CD8-positive, alpha-beta T cell (primary cell): ENCODE measurements at regions of chr16 and their contacts with region 1.

Region 1: GRCh38 chr16:28211712-28212534 is at the start of gene XPO6:
- DNase-seq: peak; percentile 96 to 100 (median 99)
- ATAC-seq: peak; percentile 90
- H3K4me3 ChIP-seq: peak within 1 kb of the TSS; percentile 69 to 91
- H3K4me3 Mint-ChIP-seq: peak within 1 kb of the TSS; percentile 90
- H3K27ac ChIP-seq: peak within 1 kb of the TSS; percentile 75 to 76
- H3K27ac Mint-ChIP-seq: peak within 1 kb of the TSS; percentile 91
- H3K4me1 ChIP-seq: peaks cover 32% of the 10 kb centered on the region
- H3K4me1 Mint-ChIP-seq: peaks cover 37% of the 10 kb centered on the region
- H3K27me3 ChIP-seq: no peaks in the 10 kb centered on the region
- H3K27me3 Mint-ChIP-seq: no peaks in the 10 kb centered on the region
- CTCF ChIP-seq: no peak
- total RNA-seq, gene XPO6: 355 to 369 TPM

Region 2: GRCh38 chr16:28164140-28164539 is 47.8 kb before region 1 on chr16:
- CTCF ChIA-PET with region 1: interaction called, 4 read pairs
- POLR2A ChIA-PET with region 1: interaction called, 5 read pairs
- intact Hi-C with region 1: loop called (anchors 1 kb)
- DNase-seq: no peak
- ATAC-seq: no peak
- H3K4me3 ChIP-seq: no peak overlapping the region
- H3K4me3 Mint-ChIP-seq: no peak overlapping the region
- H3K27ac ChIP-seq: peak overlapping the region in 1 of 2 experiments; percentile 9
- H3K27ac Mint-ChIP-seq: peak overlapping the region; percentile 89
- H3K4me1 ChIP-seq: peaks cover 82% of the 10 kb centered on the region
- H3K4me1 Mint-ChIP-seq: peaks cover 87% of the 10 kb centered on the region
- H3K27me3 ChIP-seq: no peaks in the 10 kb centered on the region
- H3K27me3 Mint-ChIP-seq: no peaks in the 10 kb centered on the region
- CTCF ChIP-seq: no peak

Region 3: GRCh38 chr16:28193530-28194423 is 18.1 kb before region 1 on chr16:
- CTCF ChIA-PET with region 1: interaction called, 12 read pairs
- POLR2A ChIA-PET with region 1: interaction called, 17 read pairs
- intact Hi-C with region 1: loop called (anchors 1 kb)
- DNase-seq: peak in 5 of 9 experiments; percentile 42 to 75 (median 57)
- ATAC-seq: no peak
- H3K4me3 ChIP-seq: peak overlapping the region; percentile 18 to 40
- H3K4me3 Mint-ChIP-seq: peak overlapping the region; percentile 81
- H3K27ac ChIP-seq: peak overlapping the region; percentile 61 to 86
- H3K27ac Mint-ChIP-seq: peak overlapping the region; percentile 98
- H3K4me1 ChIP-seq: peaks cover 80% of the 10 kb centered on the region
- H3K4me1 Mint-ChIP-seq: peaks cover 80% of the 10 kb centered on the region
- H3K27me3 ChIP-seq: no peaks in the 10 kb centered on the region
- H3K27me3 Mint-ChIP-seq: no peaks in the 10 kb centered on the region
- CTCF ChIP-seq: no peak

Region 4: GRCh38 chr16:28317040-28317880 is 105.3 kb after region 1 on chr16:
- CTCF ChIA-PET with region 1: interaction called, 14 read pairs
- POLR2A ChIA-PET with region 1: interaction called, 3 read pairs
- intact Hi-C with region 1: loop called in 1 of 2 experiments (anchors 5 kb)
- DNase-seq: peak; percentile 48 to 86 (median 77)
- ATAC-seq: peak; percentile 78
- H3K4me3 ChIP-seq: no peak overlapping the region
- H3K4me3 Mint-ChIP-seq: peak overlapping the region; percentile 41
- H3K27ac ChIP-seq: peak overlapping the region in 1 of 2 experiments; percentile 42
- H3K27ac Mint-ChIP-seq: peak overlapping the region; percentile 84
- H3K4me1 ChIP-seq: peaks cover 48% of the 10 kb centered on the region
- H3K4me1 Mint-ChIP-seq: peaks cover 43% of the 10 kb centered on the region
- H3K27me3 ChIP-seq: no peaks in the 10 kb centered on the region
- H3K27me3 Mint-ChIP-seq: no peaks in the 10 kb centered on the region
- CTCF ChIP-seq: peak; percentile 76

Region 5: DNA sequence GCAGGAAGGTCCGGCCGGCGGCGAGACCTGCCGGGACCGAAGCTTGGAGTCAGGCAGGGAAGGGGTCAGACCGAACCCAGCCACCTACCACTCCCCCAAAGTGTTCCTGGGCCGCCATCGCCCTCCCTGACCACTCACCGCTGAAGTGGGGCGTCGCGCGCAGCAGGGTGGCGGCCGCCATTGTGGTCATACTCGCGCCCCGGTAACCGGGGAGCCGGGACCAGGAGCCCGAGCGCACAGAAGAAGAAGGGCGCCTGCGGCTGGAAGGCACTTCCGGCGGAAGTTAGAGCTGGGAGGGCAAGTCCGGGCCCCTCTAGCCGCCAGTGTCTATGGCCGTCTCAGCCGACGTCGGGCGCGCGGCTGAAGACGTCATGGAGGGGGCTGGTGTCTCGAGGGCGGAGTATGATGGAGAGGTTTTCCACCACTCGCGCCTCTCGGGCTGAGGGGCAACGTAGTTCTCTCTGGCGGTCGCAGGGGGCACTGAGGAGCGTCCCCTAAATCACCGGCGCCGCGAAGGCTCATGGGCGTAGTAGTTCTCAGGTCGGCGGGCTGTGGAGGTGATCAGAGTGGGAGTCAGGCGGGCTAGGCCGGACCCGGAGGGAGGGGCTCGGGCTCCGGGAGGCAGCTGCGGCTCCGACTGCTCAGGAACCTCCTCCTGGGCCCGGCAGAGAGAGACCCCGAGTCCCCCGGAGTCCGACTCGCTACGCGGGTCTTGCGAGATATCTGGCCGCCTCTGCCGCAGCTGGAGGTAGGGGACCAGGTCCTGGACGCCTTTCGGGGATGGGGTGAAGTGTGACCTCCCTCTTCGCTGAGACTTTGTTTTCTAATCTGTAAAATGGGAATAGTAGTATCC is 634.4 kb after region 1 on chr16 and contains the start of gene TUFM:
- CTCF ChIA-PET with region 1: no interaction called
- POLR2A ChIA-PET with region 1: no interaction called
- intact Hi-C with region 1: loop called in 1 of 2 experiments (anchors 10 kb)
- DNase-seq: peak; percentile 96 to 99 (median 98)
- ATAC-seq: peak; percentile 96
- H3K4me3 ChIP-seq: peak within 1 kb of the TSS; percentile 83 to 100
- H3K4me3 Mint-ChIP-seq: peak within 1 kb of the TSS; percentile 91
- H3K27ac ChIP-seq: peak within 1 kb of the TSS; percentile 78 to 93
- H3K27ac Mint-ChIP-seq: peak within 1 kb of the TSS; percentile 94
- H3K4me1 ChIP-seq: peaks cover 23% of the 10 kb centered on the region
- H3K4me1 Mint-ChIP-seq: peaks cover 32% of the 10 kb centered on the region
- H3K27me3 ChIP-seq: no peaks in the 10 kb centered on the region
- H3K27me3 Mint-ChIP-seq: no peaks in the 10 kb centered on the region
- CTCF ChIP-seq: peak; percentile 75
- total RNA-seq, gene TUFM: 111 to 119 TPM